ENCODE measurements at regions of chr15 and their contacts with region 1.

Region 1: GRCh38 chr15:75201609-75202250 is at the start of gene C15orf39:
- DNase-seq: peak in 40 of 42 donors; percentile 18 to 83 (median 69)

Region 2: GRCh38 chr15:75029378-75030022 is 172.2 kb before region 1 on chr15:
- intact Hi-C with region 1: loop called (anchors 2 kb)
- DNase-seq: peak; percentile 87 to 98 (median 93)

Region 3: GRCh38 chr15:75042730-75043508 is 158.8 kb before region 1 on chr15:
- intact Hi-C with region 1: loop called (anchors 5 kb)
- DNase-seq: peak; percentile 47 to 85 (median 66)

Region 4: DNA sequence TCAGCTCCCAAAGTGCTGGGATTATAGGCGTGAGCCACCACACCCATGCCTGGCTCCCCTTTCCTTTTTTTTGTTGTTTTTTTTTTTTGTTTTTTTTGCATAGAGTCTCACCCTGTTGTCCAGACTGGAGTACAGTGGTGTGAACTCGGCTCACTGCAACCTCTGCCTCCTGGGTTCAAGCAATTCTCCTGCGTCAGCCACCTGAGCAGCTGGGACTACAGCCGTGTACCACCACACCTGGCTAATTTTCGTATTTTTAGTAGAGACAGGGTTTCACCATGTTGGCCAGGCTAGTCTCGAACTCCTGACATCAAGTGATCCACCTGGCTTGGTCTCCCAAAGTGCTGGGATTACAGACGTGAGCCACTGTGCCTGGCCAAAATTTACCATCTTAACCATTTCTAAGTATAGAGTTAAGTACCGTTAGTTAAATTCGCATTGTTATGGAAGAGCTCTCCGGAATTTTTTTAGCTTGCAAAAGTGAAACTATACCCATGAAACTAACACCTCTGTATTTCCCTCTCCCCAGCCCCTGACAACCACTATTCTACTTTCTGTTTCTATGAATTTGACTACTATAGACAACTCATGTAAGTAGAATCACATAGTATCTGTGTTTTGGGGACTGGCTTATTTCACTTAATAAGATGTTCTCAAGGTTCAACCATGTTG is 71.0 kb before region 1 on chr15:
- intact Hi-C with region 1: no loop called
- DNase-seq: no peak